ENCODE measurements at regions of chr1 and their contacts with region 1.

Region 1: DNA sequence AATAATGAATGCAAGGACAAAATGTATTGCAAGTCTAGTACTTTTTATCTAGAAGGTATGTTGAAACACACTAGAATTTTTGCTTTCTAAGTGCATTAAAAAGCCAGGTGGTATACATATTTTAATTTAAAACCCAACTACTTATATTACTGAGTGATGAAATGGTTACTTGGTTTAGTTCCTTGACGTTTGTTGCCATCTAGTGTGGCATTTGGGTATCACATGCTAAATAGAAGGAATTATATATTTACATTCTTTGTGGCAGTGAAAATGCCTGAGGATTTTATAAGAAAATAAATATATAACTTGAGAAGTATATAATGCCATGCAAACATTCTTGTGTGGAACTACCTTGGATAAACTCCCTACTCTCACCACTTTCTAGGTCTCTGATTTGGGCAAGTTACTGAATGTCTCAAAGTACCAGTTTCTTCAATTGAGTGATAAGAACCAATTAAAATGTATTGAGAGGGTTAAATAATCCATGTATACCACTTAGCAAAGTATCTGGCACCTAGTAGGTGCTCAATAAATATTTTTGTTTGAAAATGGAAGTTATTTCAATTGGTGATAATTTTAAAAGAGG is 69.6 kb downstream of the SDCCAG8 start:
- DNase-seq: peak in 7 of 9 donors; percentile 27 to 61 (median 44)
- ATAC-seq: peak; percentile 66
- H3K4me3 ChIP-seq: no peak overlapping the region
- H3K4me3 Mint-ChIP-seq: no peak overlapping the region
- H3K27ac ChIP-seq: no peak overlapping the region
- H3K27ac Mint-ChIP-seq: no peak overlapping the region
- H3K4me1 ChIP-seq: no peaks in the 10 kb centered on the region
- H3K4me1 Mint-ChIP-seq: peaks cover 0 to 2% (median 0%) of the 10 kb centered on the region in 7 donors
- H3K27me3 ChIP-seq: no peaks in the 10 kb centered on the region
- H3K27me3 Mint-ChIP-seq: no peaks in the 10 kb centered on the region

Region 2: GRCh38 chr1:241847796-241848685 is 1477.4 kb before region 1 on chr1 and contains the start of gene EXO1:
- CTCF ChIA-PET with region 1: no interaction called
- POLR2A ChIA-PET with region 1: no interaction called
- intact Hi-C with region 1: loop called in 1 of 2 experiments (anchors 5 kb)
- DNase-seq: peak; percentile 84 to 92 (median 89)
- ATAC-seq: peak; percentile 99
- H3K4me3 ChIP-seq: peak within 1 kb of the TSS; percentile 96
- H3K4me3 Mint-ChIP-seq: peak within 1 kb of the TSS; percentile 87 to 99 (median 96)
- H3K27ac ChIP-seq: peak within 1 kb of the TSS; percentile 96
- H3K27ac Mint-ChIP-seq: peak within 1 kb of the TSS; percentile 95 to 99 (median 99)
- H3K4me1 ChIP-seq: peaks cover 6 to 12% of the 10 kb centered on the region in 2 donors
- H3K4me1 Mint-ChIP-seq: peaks cover 7 to 42% (median 17%) of the 10 kb centered on the region in 7 donors
- H3K27me3 ChIP-seq: no peaks in the 10 kb centered on the region
- H3K27me3 Mint-ChIP-seq: peaks cover 0 to 8% (median 0%) of the 10 kb centered on the region in 5 donors
- total RNA-seq, gene EXO1: 0.11 to 29.8 (median 1.0) TPM

Region 3: GRCh38 chr1:241895013-241895412 is 1430.4 kb before region 1 on chr1:
- CTCF ChIA-PET with region 1: no interaction called
- POLR2A ChIA-PET with region 1: no interaction called
- intact Hi-C with region 1: loop called in 1 of 2 experiments (anchors 5 kb)
- DNase-seq: no peak
- ATAC-seq: no peak
- H3K4me3 ChIP-seq: no peak overlapping the region
- H3K4me3 Mint-ChIP-seq: no peak overlapping the region
- H3K27ac ChIP-seq: no peak overlapping the region
- H3K27ac Mint-ChIP-seq: no peak overlapping the region
- H3K4me1 ChIP-seq: no peaks in the 10 kb centered on the region
- H3K4me1 Mint-ChIP-seq: no peaks in the 10 kb centered on the region
- H3K27me3 ChIP-seq: no peaks in the 10 kb centered on the region
- H3K27me3 Mint-ChIP-seq: no peaks in the 10 kb centered on the region

Region 4: DNA sequence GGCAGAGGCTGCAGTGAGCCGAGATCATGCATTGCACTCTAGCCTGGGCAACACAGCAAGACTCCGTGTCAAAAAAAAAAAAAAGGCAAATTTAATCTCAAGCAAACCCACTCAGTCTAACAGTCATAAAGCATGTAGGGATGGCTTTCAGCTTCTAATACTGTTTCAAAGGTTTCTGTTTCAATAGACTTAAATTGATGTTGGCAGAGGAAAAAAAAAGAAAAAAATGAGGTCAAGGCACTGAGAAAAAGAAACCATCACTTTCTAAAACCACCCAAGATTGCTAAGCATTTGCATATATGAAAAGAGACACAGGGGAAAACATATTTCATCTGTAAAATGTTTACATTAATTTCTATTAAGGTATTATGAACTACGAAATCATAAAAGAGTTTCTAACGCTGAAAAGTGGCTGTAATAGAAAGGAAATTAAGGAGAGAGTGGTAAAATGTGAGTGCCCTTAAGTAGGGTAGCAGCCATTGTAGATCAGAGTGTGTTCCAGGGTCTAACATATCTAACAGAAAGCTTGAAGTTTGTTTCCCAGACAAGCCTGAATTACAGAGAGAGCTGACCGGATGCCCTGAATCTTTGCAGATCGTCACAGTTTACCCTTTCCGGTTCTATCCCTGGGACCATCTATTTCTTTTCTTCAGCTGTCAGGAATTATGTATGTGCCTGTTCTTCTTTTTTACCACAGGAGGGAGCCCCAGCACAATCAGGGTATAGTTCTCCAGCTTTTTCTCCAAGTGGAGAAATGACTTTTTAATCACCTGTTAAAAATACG is 870.9 kb before region 1 on chr1:
- CTCF ChIA-PET with region 1: interaction called, 4 read pairs
- POLR2A ChIA-PET with region 1: no interaction called
- intact Hi-C with region 1: loop called in 1 of 2 experiments (anchors 2 kb)
- DNase-seq: no peak
- ATAC-seq: no peak
- H3K4me3 ChIP-seq: no peak overlapping the region
- H3K4me3 Mint-ChIP-seq: no peak overlapping the region
- H3K27ac ChIP-seq: no peak overlapping the region
- H3K27ac Mint-ChIP-seq: no peak overlapping the region
- H3K4me1 ChIP-seq: no peaks in the 10 kb centered on the region
- H3K4me1 Mint-ChIP-seq: no peaks in the 10 kb centered on the region
- H3K27me3 ChIP-seq: no peaks in the 10 kb centered on the region
- H3K27me3 Mint-ChIP-seq: peaks cover 1 to 41% (median 24%) of the 10 kb centered on the region in 5 donors

Region 5: GRCh38 chr1:242467556-242468145 is 857.7 kb before region 1 on chr1:
- CTCF ChIA-PET with region 1: no interaction called
- POLR2A ChIA-PET with region 1: no interaction called
- intact Hi-C with region 1: loop called in 1 of 2 experiments (anchors 1 kb)
- DNase-seq: peak in 1 of 9 donors; percentile 2
- ATAC-seq: peak; percentile 26
- H3K4me3 ChIP-seq: no peak overlapping the region
- H3K4me3 Mint-ChIP-seq: no peak overlapping the region
- H3K27ac ChIP-seq: no peak overlapping the region
- H3K27ac Mint-ChIP-seq: no peak overlapping the region
- H3K4me1 ChIP-seq: no peaks in the 10 kb centered on the region
- H3K4me1 Mint-ChIP-seq: no peaks in the 10 kb centered on the region
- H3K27me3 ChIP-seq: no peaks in the 10 kb centered on the region
- H3K27me3 Mint-ChIP-seq: peaks cover 0 to 25% (median 3%) of the 10 kb centered on the region in 5 donors

Region 6: DNA sequence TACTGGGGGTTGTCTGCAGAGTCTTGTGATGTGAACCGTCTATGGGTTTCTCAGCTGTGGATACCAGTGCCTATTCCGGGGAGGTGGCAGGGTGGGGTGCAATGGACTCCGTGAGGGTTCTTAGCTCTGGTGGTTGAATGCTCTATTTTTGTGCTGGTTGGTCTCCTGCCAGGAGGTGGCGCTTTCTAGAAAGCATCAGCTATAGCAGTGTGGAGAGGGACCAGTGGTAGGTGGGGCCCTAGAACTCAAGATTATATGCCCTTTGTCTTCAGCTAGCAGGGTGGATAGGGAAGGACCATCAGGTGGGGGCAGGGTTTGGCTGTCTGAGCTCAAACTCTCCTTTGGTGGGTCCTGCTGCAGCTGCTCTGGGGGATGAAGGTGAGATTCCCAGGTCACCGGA is 673.6 kb before region 1 on chr1:
- CTCF ChIA-PET with region 1: no interaction called
- POLR2A ChIA-PET with region 1: no interaction called
- intact Hi-C with region 1: loop called in 1 of 2 experiments (anchors 5 kb)
- DNase-seq: no peak
- ATAC-seq: no peak
- H3K4me3 ChIP-seq: no peak overlapping the region
- H3K4me3 Mint-ChIP-seq: no peak overlapping the region
- H3K27ac ChIP-seq: no peak overlapping the region
- H3K27ac Mint-ChIP-seq: no peak overlapping the region
- H3K4me1 ChIP-seq: no peaks in the 10 kb centered on the region
- H3K4me1 Mint-ChIP-seq: no peaks in the 10 kb centered on the region
- H3K27me3 ChIP-seq: no peaks in the 10 kb centered on the region
- H3K27me3 Mint-ChIP-seq: peaks cover 0 to 13% (median 6%) of the 10 kb centered on the region in 5 donors